ENCODE measurements at regions of chr16 and their contacts with region 1.

Region 1: GRCh38 chr16:67246934-67247697 is at the start of gene FHOD1:
- DNase-seq: peak; percentile 86 to 98 (median 96)
- ATAC-seq: peak; percentile 70
- H3K4me3 ChIP-seq: peak within 1 kb of the TSS; percentile 81 to 92
- H3K4me3 Mint-ChIP-seq: peak within 1 kb of the TSS; percentile 88
- H3K27ac ChIP-seq: peak within 1 kb of the TSS; percentile 44 to 86
- H3K27ac Mint-ChIP-seq: peak within 1 kb of the TSS; percentile 82
- H3K4me1 ChIP-seq: peaks cover 47% of the 10 kb centered on the region
- H3K4me1 Mint-ChIP-seq: peaks cover 51% of the 10 kb centered on the region
- H3K27me3 ChIP-seq: peaks cover 0 to 3% of the 10 kb centered on the region in 2 experiments
- H3K27me3 Mint-ChIP-seq: peaks cover 3% of the 10 kb centered on the region
- CTCF ChIP-seq: no peak
- total RNA-seq, gene FHOD1: 15.2 to 18.7 TPM

Region 2: DNA sequence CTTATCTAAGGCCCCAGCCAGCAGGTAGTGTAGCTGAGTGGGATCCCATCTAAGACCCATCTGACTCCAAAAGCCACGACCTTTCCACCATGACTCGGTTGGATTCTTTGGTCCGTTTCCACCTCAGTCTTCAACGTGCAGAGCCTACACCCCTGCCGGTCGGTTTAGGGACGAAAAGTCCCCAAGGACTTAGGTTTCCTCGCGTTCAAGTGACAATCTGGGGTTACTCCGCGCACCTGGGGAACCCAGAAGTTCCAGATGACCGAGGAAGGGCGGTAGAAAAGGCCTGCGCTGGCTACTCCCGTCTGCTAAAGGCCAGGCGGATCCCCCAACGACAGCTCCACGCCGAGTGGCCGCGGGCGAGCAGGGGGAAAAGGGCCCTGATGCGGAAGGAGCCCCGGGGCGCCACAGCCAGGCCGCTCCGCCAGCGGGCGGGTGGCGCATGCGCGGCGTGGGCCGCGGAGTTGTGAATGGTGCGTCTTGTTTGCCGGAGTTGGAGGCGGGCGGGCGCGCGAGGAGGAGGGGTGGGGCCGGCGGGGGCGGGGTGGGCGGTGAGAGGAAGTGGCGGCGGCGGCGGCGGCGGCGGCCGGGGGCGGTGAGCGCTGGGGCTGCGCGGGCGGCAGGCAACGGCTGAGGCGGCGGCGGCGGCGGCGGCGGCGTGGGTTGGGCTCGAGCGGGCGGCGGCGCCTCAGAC is 218.4 kb before region 1 on chr16 and contains the start of gene CBFB:
- CTCF ChIA-PET with region 1: interaction called, 3 read pairs
- POLR2A ChIA-PET with region 1: no interaction called
- intact Hi-C with region 1: loop called in 1 of 2 experiments (anchors 2 kb)
- DNase-seq: peak; percentile 88 to 98 (median 93)
- ATAC-seq: peak; percentile 83
- H3K4me3 ChIP-seq: peak within 1 kb of the TSS; percentile 74 to 98
- H3K4me3 Mint-ChIP-seq: peak within 1 kb of the TSS; percentile 90
- H3K27ac ChIP-seq: peak within 1 kb of the TSS; percentile 97
- H3K27ac Mint-ChIP-seq: peak within 1 kb of the TSS; percentile 96
- H3K4me1 ChIP-seq: peaks cover 41% of the 10 kb centered on the region
- H3K4me1 Mint-ChIP-seq: peaks cover 42% of the 10 kb centered on the region
- H3K27me3 ChIP-seq: no peaks in the 10 kb centered on the region
- H3K27me3 Mint-ChIP-seq: no peaks in the 10 kb centered on the region
- CTCF ChIP-seq: no peak
- total RNA-seq, gene CBFB: 52.3 to 58.6 TPM

Region 3: DNA sequence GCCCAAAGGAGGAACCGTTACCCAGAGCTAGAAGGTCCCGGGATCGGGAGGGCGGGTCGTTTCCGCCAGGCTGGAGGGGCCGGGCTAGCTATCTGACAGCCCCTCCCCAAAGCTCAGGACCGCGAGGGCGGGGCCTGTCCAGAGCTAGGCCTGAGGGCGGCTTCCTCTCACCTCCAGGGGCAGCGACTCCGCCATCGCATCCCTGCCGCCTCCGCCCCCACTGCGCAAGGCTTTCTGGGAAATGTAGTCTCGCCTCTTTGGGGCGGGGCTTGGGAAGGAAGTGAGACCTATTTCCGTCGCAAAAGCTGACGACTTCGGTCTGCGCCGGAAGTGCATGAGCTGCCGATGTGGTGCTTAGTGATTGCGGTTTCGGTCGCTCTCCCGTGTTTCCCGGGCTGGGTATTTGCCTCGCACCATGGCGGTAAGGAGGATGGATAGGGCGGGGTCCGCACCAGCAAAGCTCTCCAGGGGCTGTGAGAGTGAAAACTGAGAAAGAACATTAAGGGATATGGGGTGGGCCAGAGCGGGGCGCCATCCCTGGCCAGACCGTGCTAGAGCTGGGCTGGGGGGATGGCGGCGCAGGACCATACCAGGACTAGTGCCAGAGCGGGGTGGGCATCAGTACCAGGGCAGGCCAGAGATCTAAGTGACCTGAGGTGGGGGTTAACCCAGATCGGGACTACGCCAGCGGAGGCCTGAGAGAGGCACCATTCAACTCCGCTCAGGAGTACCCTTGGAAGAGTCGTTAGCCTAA is 20.1 kb before region 1 on chr16 and contains the start of gene TMEM208:
- CTCF ChIA-PET with region 1: interaction called, 7 read pairs
- POLR2A ChIA-PET with region 1: interaction called, 35 read pairs
- intact Hi-C with region 1: loop called (anchors 1 kb)
- DNase-seq: peak; percentile 95 to 99 (median 98)
- ATAC-seq: peak; percentile 98
- H3K4me3 ChIP-seq: peak within 1 kb of the TSS; percentile 95 to 100
- H3K4me3 Mint-ChIP-seq: peak within 1 kb of the TSS; percentile 100
- H3K27ac ChIP-seq: peak within 1 kb of the TSS; percentile 83 to 93
- H3K27ac Mint-ChIP-seq: peak within 1 kb of the TSS; percentile 98
- H3K4me1 ChIP-seq: peaks cover 26% of the 10 kb centered on the region
- H3K4me1 Mint-ChIP-seq: peaks cover 47% of the 10 kb centered on the region
- H3K27me3 ChIP-seq: no peaks in the 10 kb centered on the region
- H3K27me3 Mint-ChIP-seq: no peaks in the 10 kb centered on the region
- CTCF ChIP-seq: no peak
- total RNA-seq, gene TMEM208: 37.1 to 44.7 TPM

Region 4: DNA sequence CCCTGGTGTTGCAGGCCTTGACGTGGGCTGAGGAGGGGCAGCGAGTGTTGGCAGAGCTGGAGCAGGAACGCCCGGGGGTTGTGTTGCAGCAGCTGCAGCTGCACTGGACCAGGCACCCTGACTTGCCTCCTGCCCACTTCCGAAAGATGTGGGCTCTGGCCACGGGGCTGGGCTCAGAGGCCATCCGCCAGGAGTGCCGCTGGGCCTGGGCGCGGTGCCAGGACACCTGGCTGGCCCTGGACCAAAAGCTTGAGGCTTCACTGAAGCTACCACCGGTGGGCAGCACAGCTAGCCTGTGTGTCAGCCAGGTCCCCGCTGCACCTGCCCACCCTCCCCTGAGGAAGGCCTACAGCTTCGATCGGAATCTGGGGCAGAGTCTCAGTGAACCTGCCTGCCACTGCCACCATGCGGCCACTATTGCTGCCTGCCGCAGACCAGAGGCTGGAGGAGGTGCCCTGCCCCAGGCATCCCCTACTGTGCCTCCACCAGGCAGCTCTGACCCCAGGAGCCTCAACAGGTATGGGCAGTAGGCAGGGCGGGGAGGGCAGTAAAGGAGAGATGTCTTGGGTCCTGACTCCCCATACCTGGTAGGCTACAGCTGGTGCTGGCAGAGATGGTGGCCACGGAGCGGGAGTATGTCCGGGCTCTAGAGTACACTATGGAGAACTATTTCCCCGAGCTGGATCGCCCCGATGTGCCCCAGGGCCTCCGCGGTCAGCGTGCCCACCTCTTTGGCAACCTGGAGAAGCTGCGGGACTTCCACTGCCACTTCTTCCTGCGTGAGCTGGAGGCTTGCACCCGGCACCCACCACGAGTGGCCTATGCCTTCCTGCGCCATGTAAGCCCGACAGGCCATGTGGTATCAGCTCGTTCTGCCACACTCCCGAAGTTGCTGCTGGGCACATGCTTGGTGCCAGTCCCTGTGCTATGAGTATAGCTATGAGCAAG is 37.9 kb after region 1 on chr16:
- CTCF ChIA-PET with region 1: no interaction called
- POLR2A ChIA-PET with region 1: no interaction called
- intact Hi-C with region 1: no loop called
- DNase-seq: no peak
- ATAC-seq: no peak
- H3K4me3 ChIP-seq: no peak overlapping the region
- H3K4me3 Mint-ChIP-seq: no peak overlapping the region
- H3K27ac ChIP-seq: no peak overlapping the region
- H3K27ac Mint-ChIP-seq: no peak overlapping the region
- H3K4me1 ChIP-seq: peaks cover 10% of the 10 kb centered on the region
- H3K4me1 Mint-ChIP-seq: peaks cover 7% of the 10 kb centered on the region
- H3K27me3 ChIP-seq: no peaks in the 10 kb centered on the region
- H3K27me3 Mint-ChIP-seq: no peaks in the 10 kb centered on the region
- CTCF ChIP-seq: no peak

Region 5: DNA sequence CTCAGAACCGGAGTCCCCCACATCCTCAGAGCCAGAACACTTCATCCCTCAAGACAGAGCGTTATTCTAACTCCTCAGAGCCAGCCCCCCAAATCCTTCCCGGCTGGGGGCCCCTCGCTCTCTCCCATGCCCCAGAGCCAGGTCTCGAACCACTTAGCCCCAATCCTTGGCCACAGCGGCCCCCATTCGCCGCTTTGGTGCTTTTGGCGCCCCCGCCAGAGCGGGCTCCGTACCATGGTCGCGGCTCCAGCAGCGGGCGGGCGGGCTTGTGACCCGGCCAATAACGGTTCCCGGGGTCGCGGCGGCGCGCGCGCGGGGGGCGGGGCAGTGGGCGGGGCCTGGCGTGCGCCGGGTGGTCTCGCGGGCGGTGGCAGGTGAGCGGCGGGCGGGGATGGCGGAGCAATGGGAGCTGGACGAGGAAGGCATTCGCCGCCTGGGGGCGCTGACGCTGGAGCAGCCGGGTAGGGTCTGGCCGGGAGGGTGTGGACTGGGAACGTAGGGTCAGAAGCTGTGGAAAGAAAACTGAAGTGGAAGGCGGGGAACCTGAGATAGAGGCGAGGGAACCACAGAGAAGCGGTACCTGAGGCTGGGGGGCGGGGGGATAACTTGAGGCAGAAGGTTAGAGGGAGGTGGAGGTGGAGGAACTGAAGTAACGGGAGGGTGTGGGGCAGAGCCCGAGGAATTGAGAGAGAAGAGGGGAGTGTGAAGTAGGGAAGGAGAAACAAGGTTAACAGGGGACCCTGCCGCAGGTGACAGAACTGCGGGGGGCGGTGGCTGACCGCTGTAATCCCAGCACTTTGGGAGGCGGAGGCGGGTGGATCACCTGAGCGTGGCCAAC is 79.6 kb after region 1 on chr16 and contains the starts of genes KCTD19 and LRRC36:
- CTCF ChIA-PET with region 1: interaction called, 3 read pairs
- POLR2A ChIA-PET with region 1: no interaction called
- intact Hi-C with region 1: loop called in 1 of 2 experiments (anchors 1 kb)
- DNase-seq: peak; percentile 13 to 77 (median 68)
- ATAC-seq: peak; percentile 84
- H3K4me3 ChIP-seq: peak within 1 kb of the TSS; percentile 68 to 69
- H3K4me3 Mint-ChIP-seq: peak within 1 kb of the TSS; percentile 86
- H3K27ac ChIP-seq: no peak within 1 kb of the TSS
- H3K27ac Mint-ChIP-seq: peak within 1 kb of the TSS; percentile 45
- H3K4me1 ChIP-seq: peaks cover 11% of the 10 kb centered on the region
- H3K4me1 Mint-ChIP-seq: peaks cover 16% of the 10 kb centered on the region
- H3K27me3 ChIP-seq: peaks cover 0 to 2% of the 10 kb centered on the region in 2 experiments
- H3K27me3 Mint-ChIP-seq: peaks cover 8% of the 10 kb centered on the region
- CTCF ChIP-seq: peak; percentile 55
- total RNA-seq, gene KCTD19: not detected
- total RNA-seq, gene LRRC36: not detected

Region 6: GRCh38 chr16:67667817-67668494 is 420.8 kb after region 1 on chr16:
- CTCF ChIA-PET with region 1: no interaction called
- POLR2A ChIA-PET with region 1: no interaction called
- intact Hi-C with region 1: loop called in 1 of 2 experiments (anchors 10 kb)
- DNase-seq: peak; percentile 64 to 91 (median 78)
- ATAC-seq: peak; percentile 90
- H3K4me3 ChIP-seq: peak overlapping the region in 1 of 2 experiments; percentile 84
- H3K4me3 Mint-ChIP-seq: peak overlapping the region; percentile 82
- H3K27ac ChIP-seq: peak overlapping the region in 1 of 2 experiments; percentile 38
- H3K27ac Mint-ChIP-seq: no peak overlapping the region
- H3K4me1 ChIP-seq: peaks cover 17% of the 10 kb centered on the region
- H3K4me1 Mint-ChIP-seq: peaks cover 16% of the 10 kb centered on the region
- H3K27me3 ChIP-seq: no peaks in the 10 kb centered on the region
- H3K27me3 Mint-ChIP-seq: no peaks in the 10 kb centered on the region
- CTCF ChIP-seq: peak; percentile 65